ENCODE measurements at regions of chr3 and their contacts with region 1.

Region 1: DNA sequence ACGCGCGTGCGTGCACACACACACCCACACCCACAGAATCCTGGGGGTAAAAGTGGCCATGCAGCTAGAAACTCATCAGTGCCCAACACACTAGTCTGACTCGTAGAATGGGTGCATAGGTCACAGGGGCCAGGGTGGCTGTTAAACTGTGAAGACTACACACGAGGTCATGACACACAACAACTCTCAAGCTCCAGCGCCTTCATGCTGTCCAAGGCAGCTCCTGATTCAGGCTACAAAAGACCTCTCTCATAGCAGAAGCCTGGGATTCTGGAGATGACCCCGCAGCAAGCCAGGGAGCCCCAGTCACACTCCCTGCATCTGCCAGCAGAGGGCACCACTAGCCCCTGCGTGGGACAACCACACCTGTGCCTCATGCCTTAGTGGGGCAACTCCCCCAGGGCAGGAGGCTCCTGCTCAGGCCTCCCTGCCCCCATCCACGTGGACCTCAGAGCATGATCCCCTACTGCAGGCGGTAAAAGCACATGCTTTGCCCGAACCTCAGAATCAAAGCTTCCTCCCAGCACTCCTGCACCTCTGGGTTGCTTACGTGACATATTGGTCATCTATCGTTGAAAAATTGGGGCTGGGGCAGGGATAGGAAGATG is 93.1 kb downstream of the LRIG1 start:
- DNase-seq: no peak
- H3K4me3 ChIP-seq: no peak overlapping the region
- CTCF ChIP-seq: peak; percentile 93

Region 2: GRCh38 chr3:66253790-66254620 is 153.7 kb before region 1 on chr3:
- CTCF ChIA-PET with region 1: interaction called, 11 read pairs
- POLR2A ChIA-PET with region 1: no interaction called
- DNase-seq: no peak
- H3K4me3 ChIP-seq: no peak overlapping the region
- CTCF ChIP-seq: peak; percentile 43

Region 3: DNA sequence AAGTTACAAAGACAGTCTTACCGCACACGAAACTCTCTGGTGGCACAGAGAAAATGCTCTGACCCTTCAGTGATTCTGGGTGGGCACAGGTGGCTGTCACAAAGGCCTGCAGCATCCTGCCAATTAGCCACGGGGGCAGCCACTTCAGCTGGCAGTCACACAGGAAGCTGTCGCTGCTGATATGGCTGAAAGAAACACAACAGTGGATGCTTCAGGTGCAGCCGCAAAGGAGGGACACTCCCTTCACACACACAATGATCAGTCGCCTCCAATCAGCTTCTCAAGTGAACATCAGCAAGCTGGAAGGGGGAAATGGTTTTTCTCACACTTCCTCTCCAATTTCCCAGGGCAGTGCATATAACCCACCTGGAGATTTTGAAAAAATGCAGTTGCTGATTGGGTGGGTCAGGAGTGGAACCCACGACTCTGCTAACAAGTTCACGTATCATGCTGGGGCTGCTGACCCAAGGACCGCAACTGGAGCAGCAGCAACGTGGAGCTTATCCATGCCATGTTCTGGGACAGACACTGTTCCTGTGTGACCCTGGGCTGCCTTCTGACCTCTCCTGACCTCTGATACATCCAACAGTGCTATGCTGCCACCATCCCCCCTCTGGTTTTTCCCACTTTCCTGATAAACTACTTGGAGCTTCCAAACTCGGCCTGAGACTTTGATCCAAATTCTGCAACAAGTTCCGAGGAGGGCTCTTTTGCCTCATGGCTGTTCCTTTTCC is 13.5 kb before region 1 on chr3:
- CTCF ChIA-PET with region 1: interaction called, 143 read pairs
- POLR2A ChIA-PET with region 1: interaction called, 3 read pairs
- DNase-seq: no peak
- H3K4me3 ChIP-seq: no peak overlapping the region
- CTCF ChIP-seq: no peak

Region 4: DNA sequence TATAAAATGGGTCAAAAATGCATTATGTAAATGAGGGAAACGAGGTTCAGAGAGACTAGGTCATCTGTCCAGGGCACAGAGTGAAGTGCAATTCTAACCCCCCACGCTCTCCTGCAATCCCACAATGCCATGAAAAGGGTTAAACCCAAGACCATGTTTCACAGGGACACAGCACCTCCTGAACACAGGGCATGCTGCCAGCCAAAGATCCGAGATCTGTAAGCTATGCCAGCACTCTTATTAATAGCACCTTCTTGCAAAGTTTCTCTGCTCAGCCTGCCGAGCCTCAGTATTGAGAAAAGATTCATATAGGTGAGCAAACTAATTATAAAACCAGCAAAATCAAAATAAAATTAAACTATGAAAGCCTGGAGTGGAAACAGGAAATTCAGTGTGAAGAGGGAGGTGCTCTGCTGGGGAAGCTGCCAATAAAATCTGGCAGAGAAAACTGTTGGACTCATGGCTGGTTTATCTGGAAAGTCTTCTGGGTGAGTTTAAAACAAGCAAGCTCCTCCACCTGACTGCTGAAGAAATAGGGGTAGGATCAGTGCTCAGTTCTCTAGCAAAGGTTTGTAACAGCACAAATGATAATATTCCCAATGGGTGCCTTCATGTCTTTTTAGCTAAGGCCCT is 42.8 kb after region 1 on chr3:
- CTCF ChIA-PET with region 1: interaction called, 13 read pairs
- POLR2A ChIA-PET with region 1: no interaction called
- DNase-seq: no peak
- H3K4me3 ChIP-seq: no peak overlapping the region
- CTCF ChIP-seq: no peak

Region 5: GRCh38 chr3:66490214-66490613 is 82.5 kb after region 1 on chr3:
- CTCF ChIA-PET with region 1: interaction called, 35 read pairs
- POLR2A ChIA-PET with region 1: interaction called, 3 read pairs
- DNase-seq: no peak
- H3K4me3 ChIP-seq: no peak overlapping the region
- CTCF ChIP-seq: no peak

Region 6: GRCh38 chr3:66803206-66803605 is 395.5 kb after region 1 on chr3:
- CTCF ChIA-PET with region 1: interaction called, 17 read pairs
- POLR2A ChIA-PET with region 1: no interaction called
- DNase-seq: no peak
- H3K4me3 ChIP-seq: no peak overlapping the region
- CTCF ChIP-seq: no peak

Region 7: GRCh38 chr3:66822186-66823008 is 414.7 kb after region 1 on chr3:
- CTCF ChIA-PET with region 1: interaction called, 248 read pairs
- POLR2A ChIA-PET with region 1: no interaction called
- DNase-seq: no peak
- H3K4me3 ChIP-seq: no peak overlapping the region
- CTCF ChIP-seq: peak; percentile 77